ENCODE measurements at regions of chr2 and their contacts with region 1.

Region 1: DNA sequence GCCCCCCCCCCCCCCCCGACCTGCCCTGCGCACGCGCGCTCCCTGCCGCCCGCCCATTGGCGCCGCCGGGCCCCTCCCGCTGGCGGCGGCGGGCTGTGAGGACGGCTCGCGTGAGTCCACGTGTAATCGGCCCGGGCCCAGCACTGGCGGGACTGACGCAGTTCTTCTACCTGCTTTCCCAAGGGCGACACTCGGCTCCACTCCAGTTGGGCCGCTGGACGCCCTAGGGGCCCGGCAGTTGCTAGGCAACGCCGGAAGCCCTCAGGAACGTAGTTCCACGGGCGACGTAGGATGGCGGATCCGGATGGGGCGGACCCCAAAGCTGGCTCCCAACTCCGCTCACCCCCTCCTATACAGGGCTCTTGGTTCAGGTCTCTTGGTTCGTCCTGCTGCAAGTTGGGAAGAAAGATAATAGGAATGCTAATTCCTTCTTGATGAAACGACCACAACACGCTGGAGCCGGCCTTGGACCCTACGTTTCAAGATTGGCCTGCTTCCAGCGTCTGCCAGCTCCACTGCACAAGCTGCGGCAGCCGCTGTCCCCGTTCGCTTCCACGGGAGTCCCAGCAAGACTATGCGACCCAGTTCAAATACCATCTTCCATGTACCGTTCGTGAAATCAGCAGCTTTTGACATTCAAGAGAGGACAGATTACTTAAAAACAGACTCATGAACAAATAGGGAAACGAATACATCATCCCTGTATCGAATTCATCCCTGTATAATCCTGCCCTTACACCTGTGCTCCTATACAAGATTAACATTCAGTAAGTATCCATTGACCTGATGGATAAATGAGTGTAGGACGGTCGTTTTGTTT is 415 bp upstream of the MCFD2 start:
- DNase-seq: peak; percentile 92
- ATAC-seq: peak; percentile 77
- H3K4me3 ChIP-seq: peak overlapping the region; percentile 79
- H3K27ac ChIP-seq: peak overlapping the region; percentile 79
- H3K4me1 ChIP-seq: peaks cover 39% of the 10 kb centered on the region
- H3K27me3 ChIP-seq: no peaks in the 10 kb centered on the region
- CTCF ChIP-seq: no peak

Region 2: GRCh38 chr2:46967990-46968647 is 52.1 kb after region 1 on chr2:
- CTCF ChIA-PET with region 1: no interaction called
- POLR2A ChIA-PET with region 1: no interaction called
- intact Hi-C with region 1: loop called (anchors 5 kb)
- DNase-seq: peak; percentile 87
- ATAC-seq: peak; percentile 79
- H3K4me3 ChIP-seq: peak overlapping the region; percentile 56
- H3K27ac ChIP-seq: peak overlapping the region; percentile 98
- H3K4me1 ChIP-seq: peaks cover 67% of the 10 kb centered on the region
- H3K27me3 ChIP-seq: no peaks in the 10 kb centered on the region
- CTCF ChIP-seq: no peak

Region 3: DNA sequence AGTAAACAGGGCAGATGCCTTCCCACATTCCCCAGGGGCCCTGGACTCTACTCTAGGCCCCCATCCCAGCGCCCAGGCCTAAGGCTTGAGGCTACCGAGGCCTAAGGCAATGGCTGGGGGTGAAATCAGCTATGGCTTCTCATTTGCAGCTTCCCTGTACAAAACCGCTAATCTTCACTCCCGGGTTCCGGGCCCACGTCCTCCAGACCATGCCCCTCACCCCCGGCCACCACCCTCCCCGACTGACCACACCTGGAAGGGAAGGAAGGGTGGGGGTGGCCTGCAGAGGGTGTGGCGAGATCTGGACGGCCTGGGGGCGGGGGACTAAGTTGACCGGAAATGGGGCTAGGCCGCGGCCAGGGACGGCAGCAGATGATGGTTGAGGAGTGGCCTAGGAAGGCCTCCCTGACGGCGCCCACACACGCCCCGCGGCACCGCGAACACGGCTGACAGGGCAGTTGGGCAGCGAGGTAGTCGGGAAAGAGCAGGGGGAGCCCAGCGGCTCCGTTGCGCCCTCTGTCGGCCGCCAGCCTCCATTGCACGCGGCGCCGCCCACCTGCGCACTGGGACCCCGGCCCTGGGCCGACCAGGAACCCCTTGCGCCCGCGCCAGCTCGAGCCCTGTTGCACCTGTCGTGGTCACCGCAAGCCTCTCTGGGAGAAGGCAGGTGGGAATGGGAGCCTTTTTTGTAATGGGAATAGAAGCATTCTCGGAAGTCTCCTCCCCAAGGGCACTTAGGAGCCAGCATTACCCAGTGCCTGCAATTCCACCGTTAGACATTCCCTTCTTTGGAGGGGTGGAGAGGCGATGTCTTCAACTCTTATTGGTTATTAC is 356.2 kb after region 1 on chr2:
- CTCF ChIA-PET with region 1: no interaction called
- POLR2A ChIA-PET with region 1: interaction called, 5 read pairs
- intact Hi-C with region 1: loop called (anchors 5 kb)
- DNase-seq: peak; percentile 70
- ATAC-seq: peak; percentile 62
- H3K4me3 ChIP-seq: peak overlapping the region; percentile 63
- H3K27ac ChIP-seq: peak overlapping the region; percentile 87
- H3K4me1 ChIP-seq: peaks cover 47% of the 10 kb centered on the region
- H3K27me3 ChIP-seq: no peaks in the 10 kb centered on the region
- CTCF ChIP-seq: peak; percentile 96

Measured in PC-3 (cell line).